Panc1 (cell line): ENCODE measurements at regions of chr10 and their contacts with region 1.

Region 1: DNA sequence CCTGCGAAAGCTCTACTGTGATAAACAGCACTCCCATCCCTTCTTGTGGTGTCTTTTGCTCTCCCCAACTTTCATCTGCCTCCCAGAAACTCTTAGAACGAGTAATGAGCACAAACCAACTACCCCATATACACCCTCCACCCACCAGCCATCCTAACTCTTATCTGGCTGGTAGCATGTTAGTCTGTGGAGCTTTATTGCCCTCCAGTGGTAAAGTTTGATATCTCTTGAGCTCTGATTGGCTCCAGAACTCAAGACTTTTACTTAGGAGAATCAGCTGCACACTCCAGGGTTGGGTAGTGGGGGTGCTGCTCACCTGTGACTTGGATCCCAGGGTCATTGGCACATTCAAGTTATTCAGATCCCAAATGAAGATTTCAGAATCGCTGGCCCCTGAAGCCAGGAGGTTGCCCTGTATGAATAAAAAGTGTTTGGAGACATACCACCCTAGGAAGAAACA is 10.9 kb downstream of the SEC31B start:
- DNase-seq: no peak
- ATAC-seq: peak; percentile 89
- H3K4me3 ChIP-seq: no peak overlapping the region
- H3K27ac ChIP-seq: no peak overlapping the region
- H3K4me1 ChIP-seq: no peaks in the 10 kb centered on the region
- H3K27me3 ChIP-seq: no peaks in the 10 kb centered on the region
- CTCF ChIP-seq: peak; percentile 88

Region 2: GRCh38 chr10:100338434-100339036 is 170.2 kb before region 1 on chr10:
- CTCF ChIA-PET with region 1: interaction called, 4 read pairs
- POLR2A ChIA-PET with region 1: no interaction called
- in situ Hi-C with region 1: no loop called
- intact Hi-C with region 1: loop called (anchors 5 kb)
- DNase-seq: no peak
- ATAC-seq: peak; percentile 82
- H3K4me3 ChIP-seq: no peak overlapping the region
- H3K27ac ChIP-seq: peak overlapping the region; percentile 20; the same call in 1 of the 2 replicates
- H3K4me1 ChIP-seq: peaks cover 26% of the 10 kb centered on the region
- H3K27me3 ChIP-seq: peaks cover 8% of the 10 kb centered on the region
- CTCF ChIP-seq: peak; percentile 99

Region 3: DNA sequence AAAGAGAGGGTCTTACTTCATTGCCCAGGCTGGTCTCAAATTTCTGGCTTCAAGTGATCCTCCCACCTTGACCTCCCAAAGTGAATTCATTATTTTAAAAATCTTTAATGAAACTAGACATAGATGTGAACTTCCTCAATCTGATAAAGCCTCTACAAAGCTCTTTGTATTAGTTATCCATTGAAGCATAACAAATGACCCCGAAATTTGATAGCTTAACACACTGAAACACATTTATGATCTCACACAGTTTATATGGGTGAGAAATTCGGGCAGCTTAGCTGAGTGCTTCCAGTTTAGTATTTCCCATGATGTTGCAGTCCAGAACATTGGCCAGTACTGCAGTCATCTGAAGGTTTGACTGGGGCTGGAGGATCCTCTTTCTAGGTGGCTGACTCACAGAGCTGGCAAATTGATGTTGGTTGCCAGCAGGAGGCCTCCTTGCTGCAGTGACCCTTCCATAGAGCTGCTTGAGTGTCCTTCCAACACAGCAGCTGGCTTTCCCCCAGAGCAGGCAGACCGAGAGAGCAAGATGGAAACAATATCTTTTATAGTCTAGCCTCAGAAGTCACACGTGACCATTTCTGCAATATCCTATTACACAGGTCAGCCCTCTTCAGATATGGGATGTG is 62.5 kb before region 1 on chr10:
- CTCF ChIA-PET with region 1: interaction called, 6 read pairs
- POLR2A ChIA-PET with region 1: no interaction called
- in situ Hi-C with region 1: no loop called
- intact Hi-C with region 1: loop called (anchors 5 kb)
- DNase-seq: no peak
- ATAC-seq: peak; percentile 76
- H3K4me3 ChIP-seq: no peak overlapping the region
- H3K27ac ChIP-seq: no peak overlapping the region
- H3K4me1 ChIP-seq: no peaks in the 10 kb centered on the region
- H3K27me3 ChIP-seq: peaks cover 10% of the 10 kb centered on the region
- CTCF ChIP-seq: no peak

Region 4: DNA sequence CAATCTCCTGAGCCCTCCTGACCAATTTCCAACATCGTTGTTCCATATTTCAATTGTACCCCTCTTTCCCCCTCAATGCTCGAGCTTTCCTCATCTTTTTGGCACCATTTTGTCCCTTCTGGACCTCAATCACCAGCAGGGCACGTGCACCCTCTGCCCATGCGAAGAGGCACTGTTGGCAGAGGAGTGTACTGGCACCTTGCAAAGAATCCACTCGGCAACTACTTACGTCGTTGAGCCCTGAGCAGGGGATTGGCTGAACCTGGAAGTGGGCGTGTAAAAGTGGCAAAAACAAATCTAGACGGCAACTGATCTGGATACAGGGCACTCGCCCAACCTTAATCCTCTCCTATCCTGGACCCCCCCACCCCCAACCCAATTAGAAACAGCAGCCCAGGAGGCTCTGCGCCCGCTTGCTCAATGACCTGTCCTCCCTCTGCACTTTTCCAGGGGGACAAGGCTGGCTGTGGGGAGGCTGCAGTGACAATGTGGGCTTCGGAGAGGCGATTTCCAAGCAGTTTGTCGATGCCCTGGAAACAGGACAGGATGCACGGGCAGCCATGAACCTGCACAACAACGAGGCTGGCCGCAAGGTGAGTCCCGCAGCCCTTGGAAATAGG is 27.1 kb before region 1 on chr10:
- CTCF ChIA-PET with region 1: interaction called, 14 read pairs
- POLR2A ChIA-PET with region 1: no interaction called
- in situ Hi-C with region 1: no loop called
- intact Hi-C with region 1: no loop called
- DNase-seq: peak; percentile 96
- ATAC-seq: peak; percentile 98
- H3K4me3 ChIP-seq: peak overlapping the region; percentile 44 to 63
- H3K27ac ChIP-seq: no peak overlapping the region
- H3K4me1 ChIP-seq: no peaks in the 10 kb centered on the region; the same call in 1 of the 2 replicates
- H3K27me3 ChIP-seq: peaks cover 29% of the 10 kb centered on the region
- CTCF ChIP-seq: no peak

Region 5: GRCh38 chr10:100518761-100519241 is 10.1 kb after region 1 on chr10:
- CTCF ChIA-PET with region 1: interaction called, 12 read pairs
- POLR2A ChIA-PET with region 1: no interaction called
- in situ Hi-C with region 1: no loop called
- intact Hi-C with region 1: no loop called
- DNase-seq: peak; percentile 48
- ATAC-seq: peak; percentile 81
- H3K4me3 ChIP-seq: no peak overlapping the region
- H3K27ac ChIP-seq: no peak overlapping the region
- H3K4me1 ChIP-seq: no peaks in the 10 kb centered on the region
- H3K27me3 ChIP-seq: no peaks in the 10 kb centered on the region
- CTCF ChIP-seq: peak; percentile 90

Region 6: GRCh38 chr10:100535715-100536353 is 27.1 kb after region 1 on chr10 and contains the start of gene HIF1AN:
- CTCF ChIA-PET with region 1: no interaction called
- POLR2A ChIA-PET with region 1: no interaction called
- in situ Hi-C with region 1: no loop called
- intact Hi-C with region 1: no loop called
- DNase-seq: peak; percentile 84
- ATAC-seq: peak; percentile 98
- H3K4me3 ChIP-seq: peak within 1 kb of the TSS; percentile 76 to 83
- H3K27ac ChIP-seq: peak within 1 kb of the TSS; percentile 90
- H3K4me1 ChIP-seq: peaks cover 25% of the 10 kb centered on the region
- H3K27me3 ChIP-seq: no peaks in the 10 kb centered on the region
- CTCF ChIP-seq: peak; percentile 99
- total RNA-seq, gene HIF1AN: 83.1 TPM